ENCODE measurements at regions of chr10 and their contacts with region 1.

Region 1: DNA sequence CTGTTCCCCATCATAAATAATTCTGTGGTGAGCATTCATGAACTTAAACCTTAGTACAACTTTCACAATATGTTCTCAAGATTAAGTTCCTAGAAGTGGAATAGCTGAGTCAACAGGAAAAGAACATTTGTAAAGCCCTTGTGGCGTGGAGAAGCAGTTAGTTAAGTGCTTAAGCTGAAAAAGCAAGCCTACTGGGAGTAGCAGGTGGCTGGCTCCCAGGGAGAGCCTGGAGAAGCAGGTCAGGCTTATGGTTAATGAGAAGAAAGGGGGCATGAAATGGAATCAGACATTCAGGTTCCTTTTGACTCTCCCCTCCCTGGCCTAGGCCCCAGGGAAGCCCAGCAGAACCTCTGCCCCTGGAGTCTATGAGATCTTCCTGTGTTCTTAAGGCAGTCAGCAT is 35.3 kb downstream of the VSTM4 start:
- DNase-seq: peak in 1 of 2 donors; percentile 73
- H3K4me3 ChIP-seq: no peak overlapping the region
- H3K27ac ChIP-seq: peak overlapping the region; percentile 72 to 75
- H3K4me1 ChIP-seq: peaks cover 10 to 49% of the 10 kb centered on the region in 2 donors
- H3K27me3 ChIP-seq: no peaks in the 10 kb centered on the region
- CTCF ChIP-seq: no peak

Region 2: DNA sequence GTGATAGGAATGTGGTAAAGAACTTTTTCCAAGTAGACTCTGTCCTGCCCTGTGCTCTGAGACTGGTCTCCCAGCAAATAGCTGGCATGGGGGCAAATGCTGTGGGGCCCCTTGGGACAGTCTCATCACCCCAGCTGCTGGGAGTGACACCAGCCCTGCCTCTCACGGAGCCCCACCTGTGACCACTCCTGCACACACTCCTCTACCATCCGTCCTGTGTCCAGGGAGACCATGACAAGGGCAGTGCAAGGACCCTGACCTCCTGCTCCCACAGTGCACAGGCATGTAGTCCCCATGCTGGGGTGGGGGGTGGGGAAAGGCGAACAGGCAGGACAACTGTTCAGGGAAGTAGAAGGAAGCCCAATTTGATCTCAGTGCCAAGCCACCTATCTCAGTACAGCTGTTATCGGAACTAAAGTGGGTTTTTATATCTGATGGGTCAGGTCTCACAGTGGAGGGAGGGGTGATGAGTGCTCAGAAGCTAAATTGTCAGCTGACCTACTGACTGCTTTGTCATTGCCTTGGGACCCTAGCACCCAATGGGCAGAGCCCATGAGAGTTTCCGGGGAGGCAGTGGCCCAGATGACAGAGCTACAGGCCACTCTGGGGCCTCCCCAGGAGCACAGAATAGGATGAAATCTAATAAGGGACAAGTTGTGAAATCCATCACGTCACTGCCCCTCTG is 10.8 kb after region 1 on chr10:
- intact Hi-C with region 1: no loop called
- DNase-seq: peak in 1 of 2 donors; percentile 42
- H3K4me3 ChIP-seq: no peak overlapping the region
- H3K27ac ChIP-seq: peak overlapping the region in 1 of 2 donors; percentile 64
- H3K4me1 ChIP-seq: peaks cover 15 to 38% of the 10 kb centered on the region in 2 donors
- H3K27me3 ChIP-seq: no peaks in the 10 kb centered on the region
- CTCF ChIP-seq: no peak

Region 3: DNA sequence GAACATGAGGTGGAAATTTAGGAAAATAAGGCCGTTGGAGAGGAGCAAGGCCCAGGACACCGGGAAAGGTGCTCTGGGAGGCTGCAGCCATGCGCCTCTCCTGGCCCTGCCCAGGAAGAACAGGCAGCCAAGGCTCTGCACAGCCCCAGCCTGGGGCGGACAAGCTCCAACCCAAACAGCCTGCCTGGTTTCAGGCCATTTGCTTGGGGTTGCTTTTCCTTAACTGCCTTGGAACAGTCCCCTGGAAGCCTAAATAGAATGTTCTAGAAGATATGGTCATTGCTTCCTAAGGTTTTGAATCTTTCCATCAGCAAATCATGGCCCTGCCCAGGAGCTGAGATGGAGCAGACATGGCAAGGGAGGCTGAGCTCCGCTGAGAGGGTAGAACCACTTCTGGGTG is 24.3 kb after region 1 on chr10:
- intact Hi-C with region 1: loop called (anchors 2 kb)
- DNase-seq: no peak
- H3K4me3 ChIP-seq: peak overlapping the region in 1 of 2 donors; percentile 0
- H3K27ac ChIP-seq: peak overlapping the region; percentile 78 to 81
- H3K4me1 ChIP-seq: peaks cover 18 to 55% of the 10 kb centered on the region in 2 donors
- H3K27me3 ChIP-seq: no peaks in the 10 kb centered on the region
- CTCF ChIP-seq: peak in 1 of 3 experiments; percentile 20

Region 4: DNA sequence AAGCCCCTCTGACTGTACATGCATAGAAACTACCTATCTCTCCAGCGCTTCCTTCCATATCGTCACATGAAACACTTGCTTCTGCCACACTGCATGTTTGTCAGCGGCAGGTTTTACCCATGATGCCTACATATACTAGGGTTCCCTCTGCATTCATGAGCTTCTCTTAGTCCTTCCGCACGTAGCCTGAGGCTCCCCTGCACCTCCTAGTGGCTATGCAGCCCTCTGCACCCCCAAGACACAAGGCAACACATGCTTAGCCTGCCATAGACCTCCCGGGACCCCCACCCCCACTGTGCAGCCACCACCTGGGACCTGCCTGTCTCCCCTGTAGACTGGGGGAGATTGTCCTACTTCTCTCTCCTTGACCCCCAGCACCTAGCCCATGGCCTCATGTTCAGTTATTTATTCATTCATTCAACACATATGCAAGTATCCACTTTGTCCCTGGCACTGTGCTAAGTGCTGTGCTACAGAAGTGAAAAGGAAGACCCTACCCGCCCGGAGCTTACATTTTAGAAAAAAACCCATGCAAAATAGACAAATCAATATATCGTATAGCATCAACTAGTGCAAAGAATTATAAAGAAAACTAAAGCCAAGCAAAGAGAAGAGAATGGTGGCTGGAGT is 84.6 kb after region 1 on chr10:
- intact Hi-C with region 1: loop called (anchors 10 kb)
- DNase-seq: no peak
- H3K4me3 ChIP-seq: no peak overlapping the region
- H3K27ac ChIP-seq: no peak overlapping the region
- H3K4me1 ChIP-seq: no peaks in the 10 kb centered on the region
- H3K27me3 ChIP-seq: no peaks in the 10 kb centered on the region
- CTCF ChIP-seq: peak; percentile 47 to 67 (median 59)